Left ventricle myocardium superior (tissue), 1 donor: ENCODE measurements at regions of chr10 and their contacts with region 1.

Region 1: GRCh38 chr10:35598384-35598783 is 6.8 kb upstream of the GJD4 start:
- DNase-seq: peak; percentile 34
- ATAC-seq: peak; percentile 37

Region 2: DNA sequence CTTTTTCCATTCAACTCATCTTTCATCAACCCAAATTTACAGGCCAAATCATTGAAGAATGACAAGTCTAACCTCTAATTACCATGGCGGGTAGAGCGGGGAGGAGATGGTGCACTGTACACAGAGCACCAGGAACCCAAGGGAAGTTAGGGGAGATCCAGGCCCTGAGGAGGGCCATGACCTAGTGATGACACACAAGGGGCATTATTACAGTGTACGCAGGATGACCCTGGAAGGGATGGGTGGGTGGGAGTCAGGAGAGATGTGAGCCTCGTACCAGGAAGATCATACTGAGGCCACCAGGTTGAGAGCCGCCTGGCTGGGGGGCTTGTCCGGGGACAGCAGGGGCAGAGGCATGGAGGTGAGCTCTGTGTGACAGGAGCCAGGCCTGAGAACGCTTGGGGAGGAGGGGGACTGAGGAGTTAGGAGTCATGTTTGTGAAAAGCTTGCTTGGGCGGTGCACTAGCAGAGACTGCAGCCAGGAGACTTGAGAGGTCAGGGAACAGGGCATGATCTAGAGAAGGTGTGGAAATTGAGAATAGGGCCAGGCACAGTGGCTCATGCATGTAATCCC is 351.5 kb before region 1 on chr10:
- intact Hi-C with region 1: loop called (anchors 10 kb)
- DNase-seq: no peak
- ATAC-seq: no peak

Region 3: GRCh38 chr10:35616004-35616403 is 17.6 kb after region 1 on chr10:
- intact Hi-C with region 1: no loop called
- DNase-seq: no peak
- ATAC-seq: no peak

Region 4: GRCh38 chr10:35896001-35896400 is 297.6 kb after region 1 on chr10:
- intact Hi-C with region 1: no loop called
- DNase-seq: no peak
- ATAC-seq: no peak